PC-3 (cell line): ENCODE measurements at regions of chr2 and their contacts with region 1.

Region 1: DNA sequence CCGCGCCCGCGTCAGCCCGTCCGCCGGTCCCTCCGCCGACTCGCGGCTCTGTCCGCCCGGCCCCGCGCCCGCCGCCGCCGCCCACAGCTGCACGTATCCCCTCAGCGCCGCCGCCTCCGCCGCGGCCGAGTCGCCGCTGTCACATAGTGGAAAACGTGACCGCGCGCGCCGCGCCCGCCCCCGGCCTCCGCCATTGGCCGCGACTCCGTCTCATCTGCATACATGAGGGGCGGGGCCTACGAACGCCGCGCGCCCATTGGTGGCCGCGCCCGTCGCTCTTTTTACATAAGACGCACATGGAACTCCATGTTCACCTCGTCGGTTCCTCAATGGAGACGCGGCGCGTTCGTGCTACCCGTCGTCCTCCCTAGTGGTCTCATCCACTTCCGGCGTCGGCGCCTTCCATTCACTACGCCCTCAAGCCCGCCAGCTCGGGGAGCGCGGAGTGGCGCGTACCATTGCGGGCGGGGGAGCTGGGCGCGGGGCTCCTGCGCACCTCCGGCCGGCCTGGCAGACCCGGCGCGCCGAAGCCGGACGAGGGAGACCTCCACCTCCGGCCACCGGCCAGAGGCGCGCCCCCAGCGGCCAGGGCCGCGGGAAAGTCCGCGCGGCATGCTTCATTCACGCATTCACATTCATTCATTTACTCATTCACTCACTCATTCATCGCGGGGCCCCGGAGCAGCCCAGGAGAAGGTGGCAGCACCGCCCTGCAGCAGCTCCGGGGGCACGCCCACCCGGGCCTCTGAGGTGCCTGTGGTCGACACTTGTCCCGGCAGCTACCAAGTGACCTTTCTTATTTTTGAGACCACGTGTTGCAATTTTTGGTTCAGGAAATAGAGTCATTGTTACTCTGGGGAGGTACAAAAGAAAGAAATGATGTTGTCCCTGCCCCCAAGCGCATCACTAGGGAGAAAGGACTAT is 502 bp upstream of the PER2 start:
- DNase-seq: peak; percentile 98
- ATAC-seq: peak; percentile 56
- H3K4me3 ChIP-seq: peak overlapping the region; percentile 80
- H3K27ac ChIP-seq: peak overlapping the region; percentile 94
- H3K4me1 ChIP-seq: peaks cover 48% of the 10 kb centered on the region
- H3K27me3 ChIP-seq: no peaks in the 10 kb centered on the region
- CTCF ChIP-seq: peak; percentile 37; the same call in 1 of the 2 replicates

Region 2: GRCh38 chr2:238117191-238118154 is 171.4 kb before region 1 on chr2:
- CTCF ChIA-PET with region 1: no interaction called
- POLR2A ChIA-PET with region 1: no interaction called
- intact Hi-C with region 1: no loop called
- DNase-seq: peak; percentile 51
- ATAC-seq: peak; percentile 45
- H3K4me3 ChIP-seq: no peak overlapping the region
- H3K27ac ChIP-seq: no peak overlapping the region
- H3K4me1 ChIP-seq: no peaks in the 10 kb centered on the region; the same call in 1 of the 2 replicates
- H3K27me3 ChIP-seq: no peaks in the 10 kb centered on the region
- CTCF ChIP-seq: no peak

Region 3: GRCh38 chr2:238263204-238264071 is 25.5 kb before region 1 on chr2:
- CTCF ChIA-PET with region 1: interaction called, 5 read pairs
- POLR2A ChIA-PET with region 1: no interaction called
- intact Hi-C with region 1: loop called (anchors 1 kb)
- DNase-seq: peak; percentile 75
- ATAC-seq: peak; percentile 88
- H3K4me3 ChIP-seq: no peak overlapping the region
- H3K27ac ChIP-seq: no peak overlapping the region
- H3K4me1 ChIP-seq: peaks cover 7% of the 10 kb centered on the region; the same call in 1 of the 2 replicates
- H3K27me3 ChIP-seq: no peaks in the 10 kb centered on the region
- CTCF ChIP-seq: peak; percentile 83

Region 4: GRCh38 chr2:238320246-238320647 is 31.3 kb after region 1 on chr2 and contains the start of gene TRAF3IP1:
- CTCF ChIA-PET with region 1: no interaction called
- POLR2A ChIA-PET with region 1: no interaction called
- intact Hi-C with region 1: loop called (anchors 1 kb)
- DNase-seq: peak; percentile 92
- ATAC-seq: peak; percentile 96
- H3K4me3 ChIP-seq: peak within 1 kb of the TSS; percentile 78
- H3K27ac ChIP-seq: 0 out of 2 replicates have a peak within 1 kb of the TSS, but pooled peaks have one; percentile 20
- H3K4me1 ChIP-seq: 0 out of 2 replicates have a peak, but pooled peaks cover 7% of the 10 kb centered on the region
- H3K27me3 ChIP-seq: no peaks in the 10 kb centered on the region
- CTCF ChIP-seq: no peak
- total RNA-seq, gene TRAF3IP1: 8.2 and 12.0 TPM in 2 replicates

Region 5: GRCh38 chr2:238431456-238431855 is 142.5 kb after region 1 on chr2:
- CTCF ChIA-PET with region 1: no interaction called
- POLR2A ChIA-PET with region 1: no interaction called
- intact Hi-C with region 1: no loop called
- DNase-seq: no peak
- ATAC-seq: no peak
- H3K4me3 ChIP-seq: no peak overlapping the region
- H3K27ac ChIP-seq: no peak overlapping the region; the same call in 1 of the 2 replicates
- H3K4me1 ChIP-seq: peaks cover 55% of the 10 kb centered on the region
- H3K27me3 ChIP-seq: no peaks in the 10 kb centered on the region
- CTCF ChIP-seq: no peak